Adrenal gland (tissue), 19 donors: ENCODE measurements at regions of chrX and their contacts with region 1.

Region 1: DNA sequence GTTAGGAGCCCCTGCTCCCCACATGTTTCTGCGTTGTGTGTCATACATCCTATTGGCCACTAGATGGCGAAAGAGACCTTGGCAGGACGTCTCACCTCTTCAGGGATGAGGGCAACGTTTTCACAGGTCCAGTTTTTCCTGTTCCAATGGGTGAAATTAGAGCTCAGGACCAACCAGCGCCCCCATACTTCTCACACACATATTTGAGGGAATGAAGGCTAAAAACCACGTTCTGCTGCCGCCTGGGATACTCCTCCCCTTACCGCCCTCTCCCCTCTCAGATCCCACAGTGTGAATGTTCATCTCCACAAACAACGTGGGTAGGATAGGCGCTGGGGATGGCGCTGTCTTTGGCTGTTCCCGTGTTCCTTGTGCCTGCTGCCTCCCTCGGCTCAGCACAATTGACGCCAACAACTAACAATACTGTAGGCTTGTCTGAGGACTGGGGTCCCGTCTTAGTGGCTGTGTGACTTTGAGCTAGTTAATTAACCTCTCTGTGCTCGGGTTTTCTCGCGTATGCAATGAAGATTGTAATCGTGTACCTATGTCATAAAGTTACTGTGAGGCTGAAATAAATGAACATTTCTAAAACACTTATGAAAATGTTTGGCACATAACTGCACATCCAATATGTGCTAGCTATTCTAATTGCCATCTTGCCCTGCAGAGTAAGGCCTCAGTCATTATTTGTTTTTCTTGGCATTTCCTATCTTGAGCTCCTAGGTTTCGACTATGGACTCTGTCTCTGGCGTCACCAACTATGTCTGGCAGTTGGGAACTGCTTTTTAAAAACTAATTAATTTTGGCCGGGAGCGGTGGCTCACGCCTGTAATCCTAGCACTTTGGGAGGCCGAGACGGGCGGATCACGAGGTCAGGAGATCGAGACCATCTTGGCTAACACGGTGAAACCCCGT is 181.3 kb upstream of the STK26 start:
- DNase-seq: peak in 6 of 7 donors; percentile 26 to 45 (median 29)
- H3K4me3 ChIP-seq: no peak overlapping the region
- H3K27ac ChIP-seq: no peak overlapping the region
- H3K4me1 ChIP-seq: no peaks in the 10 kb centered on the region
- H3K27me3 ChIP-seq: peaks cover 20% of the 10 kb centered on the region
- CTCF ChIP-seq: peak; percentile 53 to 93 (median 80)
- POLR2A ChIP-seq: no peak

Region 2: DNA sequence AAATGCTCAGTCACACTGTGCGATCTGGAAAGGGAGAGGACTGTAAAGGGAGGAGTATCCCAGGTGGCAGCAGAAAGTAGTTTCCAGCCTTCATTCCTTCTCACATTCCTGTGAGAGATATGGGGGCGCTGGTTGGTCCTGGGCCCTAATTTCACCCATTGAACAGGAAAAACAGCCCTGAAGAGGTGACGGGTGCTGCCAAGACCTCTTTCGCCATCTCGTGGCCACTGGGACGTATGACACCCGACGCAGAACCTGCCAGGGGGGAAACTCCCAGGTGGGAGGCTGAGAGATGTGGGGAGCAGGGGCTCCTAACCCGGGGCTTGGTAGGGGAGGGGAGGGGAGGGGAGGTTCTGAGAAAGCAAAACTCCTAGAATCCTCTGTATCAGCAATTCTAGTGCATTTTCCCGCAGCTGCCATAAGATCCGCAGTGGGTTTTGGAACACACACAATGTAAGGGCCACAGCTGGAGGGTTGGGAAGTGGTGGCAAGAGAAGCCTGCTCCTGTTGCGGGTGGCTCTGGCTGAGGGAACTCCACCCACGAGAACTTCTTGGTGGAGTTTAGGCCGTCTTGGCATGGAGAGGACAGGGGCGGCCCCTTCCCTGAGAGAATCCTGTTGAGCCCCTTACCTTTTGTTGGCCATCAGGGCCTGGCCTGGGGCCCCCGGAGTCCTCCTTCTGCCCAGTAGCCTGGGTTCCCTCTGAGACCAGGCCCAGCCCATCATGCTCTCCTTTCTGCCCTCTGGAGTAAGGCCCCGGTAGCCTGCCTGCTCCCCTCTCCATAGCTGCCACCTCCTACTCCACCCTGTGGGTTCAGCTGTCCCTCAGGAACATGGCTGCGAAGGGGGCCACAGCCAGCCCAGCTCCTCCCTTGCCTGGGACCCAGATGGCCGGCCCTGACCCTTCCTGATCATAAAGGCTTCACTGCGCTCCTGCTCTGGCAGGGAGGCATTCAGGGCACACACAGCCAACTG is 163.8 kb before region 1 on chrX:
- intact Hi-C with region 1: loop called in 1 of 2 experiments (anchors 5 kb)
- DNase-seq: peak; percentile 26 to 50 (median 29)
- H3K4me3 ChIP-seq: no peak overlapping the region
- H3K27ac ChIP-seq: no peak overlapping the region
- H3K4me1 ChIP-seq: no peaks in the 10 kb centered on the region
- H3K27me3 ChIP-seq: peaks cover 21% of the 10 kb centered on the region
- CTCF ChIP-seq: peak in 5 of 6 experiments; percentile 40 to 60 (median 59)
- POLR2A ChIP-seq: no peak

Region 3: DNA sequence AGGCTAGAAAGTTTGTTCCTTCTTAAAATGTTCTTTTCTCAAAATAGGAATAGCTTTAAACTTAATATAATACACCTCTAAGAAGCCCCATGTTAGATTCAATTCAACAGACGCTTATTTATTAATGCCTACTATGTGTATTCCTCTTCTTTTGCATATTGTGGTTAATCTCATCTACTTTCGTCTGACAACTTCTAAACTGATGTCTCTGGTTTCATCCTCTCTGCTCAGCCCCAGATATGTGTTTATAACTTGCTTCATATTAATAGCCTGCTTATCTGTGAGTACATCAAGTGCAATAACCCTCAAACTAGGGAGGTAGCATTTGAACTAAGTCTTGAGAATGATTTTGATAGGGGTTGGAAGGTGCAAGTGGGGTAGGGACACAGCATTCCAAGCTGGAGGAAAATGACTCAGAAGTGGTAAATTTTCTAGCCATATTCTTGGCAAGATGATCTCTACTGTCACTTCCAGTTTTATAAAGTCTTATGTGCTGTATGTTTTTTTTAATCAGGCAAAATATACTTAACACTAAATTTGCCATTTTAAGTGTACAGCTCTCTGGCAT is 218.3 kb after region 1 on chrX:
- intact Hi-C with region 1: loop called in 1 of 2 experiments (anchors 10 kb)
- DNase-seq: no peak
- H3K4me3 ChIP-seq: no peak overlapping the region
- H3K27ac ChIP-seq: no peak overlapping the region
- H3K4me1 ChIP-seq: no peaks in the 10 kb centered on the region
- H3K27me3 ChIP-seq: peaks cover 15% of the 10 kb centered on the region
- CTCF ChIP-seq: no peak
- POLR2A ChIP-seq: no peak